Panc1 (cell line): ENCODE measurements at regions of chr10 and their contacts with region 1.

Region 1: GRCh38 chr10:31923389-31923788 is 5.2 kb downstream of the ARHGAP12 start:
- DNase-seq: no peak
- ATAC-seq: no peak
- H3K4me3 ChIP-seq: no peak overlapping the region
- H3K27ac ChIP-seq: no peak overlapping the region
- H3K4me1 ChIP-seq: peaks cover 20% of the 10 kb centered on the region
- H3K27me3 ChIP-seq: no peaks in the 10 kb centered on the region
- CTCF ChIP-seq: no peak

Region 2: DNA sequence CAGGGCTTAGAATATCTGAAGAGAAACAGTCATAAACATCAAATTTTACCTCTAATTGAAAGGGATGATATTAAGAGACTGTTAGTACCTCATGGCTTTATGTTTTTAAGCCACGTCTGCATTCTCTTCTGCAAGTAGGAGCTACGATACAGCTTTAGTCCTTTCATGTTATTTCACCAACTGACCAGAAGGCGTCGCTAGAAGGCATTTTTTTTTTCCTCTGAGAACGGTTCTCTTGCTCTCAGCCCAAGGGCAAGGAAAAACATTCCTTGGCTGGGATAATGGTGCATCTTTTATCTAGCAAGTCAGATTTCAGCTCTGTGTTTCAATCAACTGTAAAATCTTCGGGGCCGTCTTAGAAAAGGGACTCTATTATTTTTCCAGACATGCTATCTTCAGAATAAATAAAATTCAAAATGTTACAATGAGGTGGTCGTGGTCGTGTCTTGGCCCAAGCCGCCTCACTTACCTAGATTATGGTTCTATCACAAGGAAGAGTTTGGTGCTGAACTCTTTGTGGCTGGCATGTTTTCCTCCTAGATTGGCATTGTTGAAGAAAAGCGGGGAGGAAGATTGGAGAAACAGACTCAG is 1252.3 kb before region 1 on chr10:
- CTCF ChIA-PET with region 1: no interaction called
- POLR2A ChIA-PET with region 1: interaction called, 10 read pairs
- in situ Hi-C with region 1: no loop called
- intact Hi-C with region 1: no loop called
- DNase-seq: peak; percentile 73
- ATAC-seq: peak; percentile 79
- H3K4me3 ChIP-seq: no peak overlapping the region
- H3K27ac ChIP-seq: no peak overlapping the region
- H3K4me1 ChIP-seq: no peaks in the 10 kb centered on the region; the same call in 1 of the 2 replicates
- H3K27me3 ChIP-seq: no peaks in the 10 kb centered on the region
- CTCF ChIP-seq: peak; percentile 78

Region 3: GRCh38 chr10:31961277-31962074 is 38.1 kb after region 1 on chr10:
- CTCF ChIA-PET with region 1: no interaction called
- POLR2A ChIA-PET with region 1: no interaction called
- in situ Hi-C with region 1: no loop called
- intact Hi-C with region 1: no loop called
- DNase-seq: no peak
- ATAC-seq: peak; percentile 42; the same call in 1 of the 2 replicates
- H3K4me3 ChIP-seq: no peak overlapping the region
- H3K27ac ChIP-seq: no peak overlapping the region
- H3K4me1 ChIP-seq: peaks cover 4% of the 10 kb centered on the region
- H3K27me3 ChIP-seq: no peaks in the 10 kb centered on the region
- CTCF ChIP-seq: no peak